ENCODE measurements at regions of chr2 and their contacts with region 1.

Region 1: GRCh38 chr2:143128681-143129580 is at the start of gene ARHGAP15:
- DNase-seq: peak in 2 of 3 donors; percentile 28 to 44
- ATAC-seq: peak; percentile 60 to 81 (median 66)
- H3K4me3 ChIP-seq: peak within 1 kb of the TSS in 1 of 3 donors; percentile 22
- H3K27ac ChIP-seq: peak within 1 kb of the TSS in 2 of 3 donors; percentile 22 to 37
- H3K4me1 ChIP-seq: no peaks in the 10 kb centered on the region
- H3K27me3 ChIP-seq: no peaks in the 10 kb centered on the region
- CTCF ChIP-seq: no peak
- POLR2A ChIP-seq: no peak
- total RNA-seq, gene ARHGAP15: 3.3 to 8.2 (median 6.6) TPM

Region 2: DNA sequence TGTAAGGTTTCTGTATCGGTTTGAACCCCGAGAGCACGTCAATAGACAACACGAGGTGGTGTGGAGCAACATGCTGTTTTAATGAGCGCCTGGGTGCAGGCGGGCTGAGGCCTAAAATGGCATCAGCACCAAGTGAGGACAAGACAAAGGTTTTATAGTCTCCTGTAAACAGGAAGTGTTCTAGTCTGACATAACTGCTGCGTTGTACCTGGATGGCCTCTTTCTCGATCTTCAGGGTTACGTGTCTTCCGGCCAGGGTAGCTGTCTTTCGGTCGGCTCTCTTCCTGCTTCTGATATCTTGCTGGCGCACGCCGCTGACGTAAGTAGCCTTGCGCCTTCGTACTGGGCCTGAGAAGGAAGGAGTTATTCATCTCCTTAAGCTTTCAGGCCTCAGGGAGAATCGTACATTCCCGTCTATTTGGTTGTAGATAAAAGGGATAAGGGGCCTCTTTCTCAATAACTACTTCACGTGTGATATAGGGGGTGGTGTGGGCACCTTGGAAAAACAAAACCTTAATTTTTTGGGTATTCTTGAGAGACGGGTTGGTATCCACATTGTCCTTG is 198.0 kb before region 1 on chr2:
- intact Hi-C with region 1: no loop called
- DNase-seq: no peak
- ATAC-seq: no peak
- H3K4me3 ChIP-seq: no peak overlapping the region
- H3K27ac ChIP-seq: no peak overlapping the region
- H3K4me1 ChIP-seq: no peaks in the 10 kb centered on the region
- H3K27me3 ChIP-seq: no peaks in the 10 kb centered on the region
- CTCF ChIP-seq: no peak
- POLR2A ChIP-seq: no peak

Region 3: DNA sequence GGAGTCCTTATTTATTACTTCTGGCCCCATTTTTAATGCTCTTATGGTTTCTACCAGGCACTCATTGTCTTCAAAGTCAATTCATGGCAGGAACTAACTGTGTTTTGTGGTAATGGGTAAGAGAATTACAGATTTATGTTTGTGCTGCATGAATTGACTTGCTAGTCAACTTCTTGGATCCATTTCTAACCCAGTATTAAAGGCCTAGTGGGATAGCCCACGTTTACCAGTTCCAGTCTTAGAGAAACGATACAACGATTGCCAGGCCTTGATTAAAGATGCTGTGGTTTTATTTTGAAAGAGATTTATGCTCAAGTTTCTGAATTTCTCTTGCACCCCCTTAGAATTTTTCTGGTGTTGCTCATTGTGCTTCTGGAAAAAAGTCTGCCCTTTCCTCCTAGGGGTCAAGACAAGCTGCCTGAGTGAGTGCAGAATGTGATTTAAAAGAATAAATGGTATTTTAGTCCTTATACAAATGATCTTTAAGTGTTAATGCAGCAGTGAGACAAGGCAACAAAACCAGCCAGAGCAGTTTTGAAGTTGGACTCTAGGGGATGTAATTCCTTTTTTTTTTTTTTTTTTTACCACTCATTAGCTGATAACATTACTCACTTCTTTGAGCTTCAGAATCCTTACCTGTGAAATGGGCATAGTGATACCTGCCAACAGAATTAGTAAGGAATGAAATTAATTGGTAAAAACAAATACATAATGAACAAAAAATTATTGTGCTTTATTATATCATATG is 101.7 kb after region 1 on chr2:
- intact Hi-C with region 1: loop called in 1 of 2 experiments (anchors 10 kb)
- DNase-seq: no peak
- ATAC-seq: no peak
- H3K4me3 ChIP-seq: no peak overlapping the region
- H3K27ac ChIP-seq: no peak overlapping the region
- H3K4me1 ChIP-seq: no peaks in the 10 kb centered on the region
- H3K27me3 ChIP-seq: no peaks in the 10 kb centered on the region
- CTCF ChIP-seq: no peak
- POLR2A ChIP-seq: no peak

Measured in right lobe of liver (tissue), 6 donors.